BJ (cell line): ENCODE measurements at regions of chr11 and their contacts with region 1.

Region 1: DNA sequence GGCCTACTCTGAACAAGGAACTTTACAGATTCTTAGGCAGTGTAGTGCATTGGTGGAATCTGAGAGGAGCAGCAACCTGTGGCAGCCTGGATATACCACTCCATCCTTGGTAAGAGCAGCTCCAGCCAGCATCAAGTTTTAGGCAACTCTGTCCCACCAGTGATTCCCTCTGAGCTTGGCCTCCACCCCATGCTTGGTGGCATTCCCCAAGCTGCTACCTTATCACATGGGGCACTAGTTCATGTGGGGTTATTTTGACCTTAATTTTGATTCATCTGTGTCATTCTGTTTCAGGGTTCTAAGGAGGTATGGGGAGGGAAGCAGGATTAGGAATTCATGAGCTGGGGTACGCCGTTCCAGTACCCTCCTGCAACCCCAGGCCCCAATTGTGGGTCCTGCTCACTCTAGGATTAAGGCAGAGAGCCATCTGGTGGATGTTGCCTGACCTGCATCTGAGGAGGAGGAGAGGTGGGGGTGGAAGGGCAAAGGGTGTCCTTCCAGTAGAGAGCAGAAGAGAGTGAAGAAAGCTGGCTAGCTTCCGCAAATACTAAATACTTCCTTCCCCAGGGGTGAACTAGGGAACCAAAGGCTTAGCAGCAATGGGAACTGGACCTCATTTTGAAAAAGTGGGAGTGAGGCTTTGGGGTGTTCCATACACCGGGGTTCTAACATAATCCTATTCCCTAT is 10.5 kb downstream of the LRRC51 start:
- DNase-seq: no peak
- H3K4me3 ChIP-seq: no peak overlapping the region
- H3K27me3 ChIP-seq: no peaks in the 10 kb centered on the region
- CTCF ChIP-seq: peak; percentile 90

Region 2: GRCh38 chr11:71459096-71459766 is 631.9 kb before region 1 on chr11:
- CTCF ChIA-PET with region 1: no interaction called
- POLR2A ChIA-PET with region 1: no interaction called
- DNase-seq: no peak
- H3K4me3 ChIP-seq: no peak overlapping the region
- H3K27me3 ChIP-seq: no peaks in the 10 kb centered on the region
- CTCF ChIP-seq: no peak

Region 3: GRCh38 chr11:72015511-72016171 is 75.5 kb before region 1 on chr11:
- CTCF ChIA-PET with region 1: interaction called, 209 read pairs
- POLR2A ChIA-PET with region 1: no interaction called
- DNase-seq: no peak
- H3K4me3 ChIP-seq: no peak overlapping the region
- H3K27me3 ChIP-seq: no peaks in the 10 kb centered on the region
- CTCF ChIP-seq: peak; percentile 55

Region 4: DNA sequence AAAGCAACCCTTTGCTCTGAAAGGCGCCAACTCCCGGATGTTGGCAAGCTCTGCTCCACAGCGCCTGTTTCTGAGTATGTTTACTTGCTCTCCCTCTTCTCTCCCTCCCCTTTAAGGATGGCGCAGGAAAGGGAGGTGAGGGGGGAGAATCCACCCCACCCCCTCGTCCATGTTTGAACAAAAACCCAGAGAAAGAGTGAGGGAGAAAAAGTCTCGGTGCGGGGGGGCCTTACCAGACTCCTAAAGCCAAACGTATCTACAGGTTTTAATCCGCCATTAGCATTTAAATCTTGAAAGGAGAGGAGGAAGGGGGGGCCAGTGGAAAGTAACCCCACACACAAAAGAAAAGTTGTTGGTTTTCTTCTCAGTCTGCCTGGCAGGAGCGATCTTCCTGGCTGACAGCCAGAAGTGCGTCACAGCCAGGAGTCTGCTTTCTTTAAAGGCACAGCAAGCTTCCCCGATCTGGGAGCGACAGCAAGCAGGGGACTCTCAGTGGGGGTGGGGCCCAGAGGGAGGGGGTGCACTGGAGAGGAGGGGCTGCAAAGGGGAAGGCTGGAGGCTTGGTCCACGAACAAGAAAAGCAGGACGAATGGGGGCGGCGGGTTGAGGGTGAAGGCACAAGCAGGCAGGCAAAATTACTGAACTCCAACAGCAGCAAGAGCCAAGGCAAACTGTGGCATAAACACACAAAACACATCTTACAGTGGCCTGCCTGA is 50.3 kb before region 1 on chr11:
- CTCF ChIA-PET with region 1: interaction called, 12 read pairs
- POLR2A ChIA-PET with region 1: interaction called, 3 read pairs
- DNase-seq: peak; percentile 66
- H3K4me3 ChIP-seq: peak overlapping the region; percentile 75
- H3K27me3 ChIP-seq: no peaks in the 10 kb centered on the region
- CTCF ChIP-seq: no peak

Region 5: GRCh38 chr11:72069787-72070251 is 21.3 kb before region 1 on chr11:
- CTCF ChIA-PET with region 1: interaction called, 14 read pairs
- POLR2A ChIA-PET with region 1: no interaction called
- DNase-seq: peak; percentile 67
- H3K4me3 ChIP-seq: no peak overlapping the region
- H3K27me3 ChIP-seq: no peaks in the 10 kb centered on the region
- CTCF ChIP-seq: no peak

Region 6: GRCh38 chr11:72080256-72080974 is 10.7 kb before region 1 on chr11 and contains the starts of genes LRRC51 and NUMA1:
- CTCF ChIA-PET with region 1: interaction called, 28 read pairs
- POLR2A ChIA-PET with region 1: no interaction called
- DNase-seq: peak; percentile 100
- H3K4me3 ChIP-seq: peak within 1 kb of the TSS; percentile 87
- H3K27me3 ChIP-seq: no peaks in the 10 kb centered on the region
- CTCF ChIP-seq: no peak
- polyA plus RNA-seq, gene LRRC51: 9.8 TPM in 2 replicates
- polyA plus RNA-seq, gene NUMA1: 87.1 and 120 TPM in 2 replicates

Region 7: GRCh38 chr11:72102946-72103753 is 12.0 kb after region 1 on chr11 and contains the start of gene LAMTOR1:
- CTCF ChIA-PET with region 1: interaction called, 49 read pairs
- POLR2A ChIA-PET with region 1: no interaction called
- DNase-seq: peak; percentile 92
- H3K4me3 ChIP-seq: peak within 1 kb of the TSS; percentile 65
- H3K27me3 ChIP-seq: no peaks in the 10 kb centered on the region
- CTCF ChIP-seq: peak; percentile 52
- polyA plus RNA-seq, gene LAMTOR1: 105 and 145 TPM in 2 replicates

Region 8: DNA sequence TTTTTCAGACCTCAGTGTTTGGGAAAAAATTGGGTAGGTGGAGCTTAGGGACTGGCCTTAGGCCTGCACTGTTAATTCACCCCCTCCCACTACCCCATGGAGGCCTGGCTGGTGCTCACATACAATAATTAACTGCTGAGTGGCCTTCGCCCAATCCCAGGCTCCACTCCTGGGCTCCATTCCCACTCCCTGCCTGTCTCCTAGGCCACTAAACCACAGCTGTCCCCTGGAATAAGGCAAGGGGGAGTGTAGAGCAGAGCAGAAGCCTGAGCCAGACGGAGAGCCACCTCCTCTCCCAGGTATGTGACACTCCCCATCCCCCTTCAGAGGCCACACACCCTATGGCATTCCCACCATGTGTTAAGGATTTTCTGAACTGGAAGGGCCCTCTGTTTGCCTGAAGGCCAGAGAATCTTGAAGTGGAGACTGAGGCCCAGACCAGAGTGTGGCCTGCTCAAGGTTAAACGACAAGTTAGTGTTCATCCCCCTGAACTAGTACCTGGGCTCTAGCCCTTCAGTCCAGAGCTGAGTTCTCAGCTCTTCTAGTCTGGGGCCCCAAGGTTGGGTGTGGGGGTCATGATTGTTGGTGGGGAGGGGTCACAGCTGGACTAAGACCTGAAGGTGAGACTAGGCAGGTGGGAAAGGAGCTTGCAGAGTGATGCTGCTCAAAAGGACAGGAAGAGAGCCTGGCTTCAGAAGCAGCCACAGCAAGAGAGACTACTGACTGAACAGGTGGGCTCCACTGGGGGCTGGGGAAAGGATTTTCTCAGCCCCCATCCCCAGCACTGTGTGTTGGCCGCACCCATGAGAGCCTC is 98.5 kb after region 1 on chr11:
- CTCF ChIA-PET with region 1: interaction called, 27 read pairs
- POLR2A ChIA-PET with region 1: no interaction called
- DNase-seq: no peak
- H3K4me3 ChIP-seq: no peak overlapping the region
- H3K27me3 ChIP-seq: no peaks in the 10 kb centered on the region
- CTCF ChIP-seq: no peak